ENCODE measurements at regions of chr20 and their contacts with region 1.

Region 1: GRCh38 chr20:58870239-58871014 is 17.9 kb downstream of the GNAS start:
- DNase-seq: peak; percentile 35
- H3K4me3 ChIP-seq: no peak overlapping the region
- H3K27ac ChIP-seq: no peak overlapping the region
- H3K4me1 ChIP-seq: no peaks in the 10 kb centered on the region
- H3K27me3 ChIP-seq: peaks cover 5% of the 10 kb centered on the region
- CTCF ChIP-seq: peak; percentile 87 to 96

Region 2: GRCh38 chr20:59032023-59032712 is 161.7 kb after region 1 on chr20 and contains the start of gene ATP5F1E:
- CTCF ChIA-PET with region 1: interaction called, 11 read pairs
- dilution Hi-C with region 1: no loop called
- in situ Hi-C with region 1: no loop called
- intact Hi-C with region 1: loop called (anchors 1 kb)
- DNase-seq: peak; percentile 94
- H3K4me3 ChIP-seq: peak within 1 kb of the TSS; percentile 87 to 93 (median 93)
- H3K27ac ChIP-seq: peak within 1 kb of the TSS; percentile 72
- H3K4me1 ChIP-seq: peaks cover 32% of the 10 kb centered on the region
- H3K27me3 ChIP-seq: no peaks in the 10 kb centered on the region
- CTCF ChIP-seq: no peak
- total RNA-seq, gene ATP5F1E: 13.7 to 75.4 TPM

Region 3: DNA sequence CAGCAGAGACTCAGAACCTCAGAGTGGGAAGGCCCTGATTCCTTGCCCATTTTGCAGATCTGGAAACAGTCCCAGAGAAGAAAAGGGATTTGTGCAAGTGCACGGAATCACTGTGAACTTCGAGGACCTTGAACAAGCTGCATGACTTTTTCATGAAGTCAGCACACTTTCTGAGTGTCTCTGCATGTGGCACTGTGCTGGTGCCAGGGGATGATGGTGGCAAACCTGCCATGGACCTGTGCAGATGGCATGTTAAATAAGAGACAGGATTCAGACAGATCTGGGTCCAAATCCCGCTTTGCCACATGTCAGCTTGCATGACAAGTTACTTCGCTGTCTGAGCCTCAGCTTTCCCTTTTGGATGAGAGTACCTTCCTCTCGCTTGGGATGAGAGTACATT is 320.0 kb after region 1 on chr20:
- CTCF ChIA-PET with region 1: interaction called, 13 read pairs
- dilution Hi-C with region 1: no loop called
- in situ Hi-C with region 1: no loop called
- intact Hi-C with region 1: no loop called
- DNase-seq: no peak
- H3K4me3 ChIP-seq: no peak overlapping the region
- H3K27ac ChIP-seq: no peak overlapping the region
- H3K4me1 ChIP-seq: no peaks in the 10 kb centered on the region
- H3K27me3 ChIP-seq: no peaks in the 10 kb centered on the region
- CTCF ChIP-seq: no peak

Region 4: DNA sequence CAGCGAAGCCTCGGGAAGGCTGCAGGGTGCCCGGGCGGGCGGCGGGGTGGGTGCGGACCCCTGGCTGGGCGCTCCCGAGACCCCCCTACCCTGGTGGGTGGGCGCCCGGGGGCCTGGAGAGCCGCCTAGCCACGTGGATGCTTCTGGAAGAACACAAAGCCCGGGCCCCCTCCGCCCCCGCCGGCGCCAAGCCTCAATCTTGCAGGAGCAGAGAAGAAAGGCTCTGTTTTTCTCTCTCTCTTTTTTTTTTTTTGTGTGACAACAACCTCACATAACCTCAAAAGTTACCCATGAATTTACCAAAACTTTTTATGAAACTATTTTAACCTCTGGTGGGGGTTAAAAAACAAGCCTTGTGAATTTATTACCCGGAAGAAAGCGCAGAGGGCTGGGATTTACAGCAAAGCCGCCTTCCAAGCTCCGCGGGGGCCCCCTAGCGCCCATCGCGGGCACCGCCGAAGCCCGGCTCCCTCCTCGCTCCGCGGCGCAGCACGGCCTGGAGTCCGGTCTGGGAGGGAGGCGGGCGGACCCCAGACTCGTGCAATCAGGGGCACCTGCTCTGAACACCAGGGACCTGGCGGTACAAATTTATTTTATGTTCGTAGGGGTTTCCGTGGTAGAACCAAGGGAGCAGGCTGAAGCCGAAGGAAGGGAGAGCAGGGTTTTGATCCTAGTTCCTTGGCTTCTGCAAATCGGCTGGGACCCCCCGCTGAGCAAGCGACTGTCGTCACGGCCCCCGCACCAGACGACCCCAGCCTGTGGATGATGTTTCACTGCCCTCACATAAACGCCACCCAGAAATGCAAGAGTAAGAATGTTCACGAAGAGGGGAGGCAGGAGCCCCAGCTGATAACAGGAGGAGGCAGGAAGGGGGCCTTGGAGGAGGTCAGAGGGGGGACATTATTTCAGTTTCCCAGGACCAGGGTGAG is 352.1 kb after region 1 on chr20:
- CTCF ChIA-PET with region 1: interaction called, 3 read pairs
- dilution Hi-C with region 1: loop called (anchors 25 kb)
- in situ Hi-C with region 1: loop called (anchors 5 to 10 kb)
- intact Hi-C with region 1: loop called (anchors 1 kb)
- DNase-seq: peak; percentile 39
- H3K4me3 ChIP-seq: peak overlapping the region; percentile 42 to 74 (median 45)
- H3K27ac ChIP-seq: no peak overlapping the region
- H3K4me1 ChIP-seq: peaks cover 6% of the 10 kb centered on the region
- H3K27me3 ChIP-seq: peaks cover 9% of the 10 kb centered on the region
- CTCF ChIP-seq: peak; percentile 72 to 92

Region 5: DNA sequence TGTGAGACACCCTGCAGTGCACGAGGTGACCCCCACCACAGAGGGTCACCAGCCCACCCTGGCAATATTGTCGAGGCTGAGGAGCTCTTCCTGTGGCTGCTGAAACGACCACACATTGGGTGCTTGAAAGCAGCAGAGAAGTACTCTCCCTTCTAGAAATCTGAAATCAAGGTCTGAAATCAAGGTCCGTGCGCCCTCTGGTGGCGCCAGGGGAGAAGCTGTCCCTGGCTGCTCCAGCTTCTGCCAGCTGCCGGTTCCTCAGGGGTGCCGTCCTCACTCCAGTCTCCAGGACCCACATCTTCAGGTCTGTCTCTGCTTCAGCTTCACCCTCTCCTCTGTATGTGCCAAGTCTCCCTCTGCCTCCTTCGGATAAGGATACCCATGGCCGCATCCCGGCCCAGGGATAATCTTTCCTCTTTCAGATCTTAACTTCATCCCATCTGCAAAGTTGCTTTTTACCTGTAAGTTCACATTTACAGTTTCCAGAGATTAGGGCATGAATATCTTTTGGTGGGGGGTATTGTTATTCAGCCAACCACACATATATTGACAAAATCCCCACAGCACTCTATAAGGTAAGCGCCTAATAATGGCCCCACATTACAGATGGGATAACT is 625.6 kb after region 1 on chr20:
- CTCF ChIA-PET with region 1: no interaction called
- dilution Hi-C with region 1: no loop called
- in situ Hi-C with region 1: no loop called
- intact Hi-C with region 1: loop called (anchors 5 kb)
- DNase-seq: peak; percentile 32
- H3K4me3 ChIP-seq: no peak overlapping the region
- H3K27ac ChIP-seq: no peak overlapping the region
- H3K4me1 ChIP-seq: no peaks in the 10 kb centered on the region
- H3K27me3 ChIP-seq: no peaks in the 10 kb centered on the region
- CTCF ChIP-seq: peak; percentile 83 to 90